ENCODE measurements at regions of chr5 and their contacts with region 1.

Region 1: DNA sequence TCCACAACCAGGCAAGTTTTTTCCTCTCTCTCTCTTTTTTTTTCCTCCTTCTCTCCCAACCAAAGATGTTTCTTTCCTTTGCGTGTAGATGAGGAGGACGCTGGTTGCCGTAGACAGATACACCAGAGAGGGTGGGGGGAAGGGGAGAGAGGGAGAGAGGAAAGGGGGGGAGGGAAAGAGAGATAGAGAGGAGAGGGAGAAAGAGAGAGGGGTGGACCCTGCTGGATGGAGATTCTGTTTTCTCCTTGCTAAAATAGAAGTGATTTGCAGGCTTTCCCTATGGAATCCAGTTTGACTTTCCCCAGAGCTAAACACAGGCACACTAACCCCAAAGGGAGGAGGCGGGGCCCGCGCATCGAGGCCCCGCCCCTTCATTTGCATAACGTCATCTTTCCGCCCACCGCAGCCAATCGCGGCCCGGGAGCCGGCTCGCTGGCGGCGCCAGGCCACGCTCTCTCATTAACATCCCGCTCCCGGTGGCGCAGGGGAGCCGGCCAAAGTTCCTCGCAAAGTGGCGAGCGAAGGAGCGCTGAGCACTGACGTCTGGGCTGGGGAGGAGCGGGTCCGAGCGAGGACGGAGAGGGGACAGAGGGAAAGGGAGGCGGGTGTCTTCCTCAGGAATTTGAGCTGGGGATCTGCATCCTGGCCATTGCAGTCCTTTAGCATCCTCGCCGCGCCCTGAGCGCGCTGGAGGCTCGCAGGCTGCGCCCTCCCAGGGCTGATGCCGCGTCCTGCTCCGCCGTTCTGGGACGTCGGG is 487 bp upstream of the EBF1 start:
- DNase-seq: peak; percentile 85
- H3K4me3 ChIP-seq: peak overlapping the region; percentile 35
- H3K27ac ChIP-seq: peak overlapping the region; percentile 44
- H3K4me1 ChIP-seq: no peaks in the 10 kb centered on the region
- H3K27me3 ChIP-seq: peaks cover 82% of the 10 kb centered on the region
- CTCF ChIP-seq: no peak

Region 2: DNA sequence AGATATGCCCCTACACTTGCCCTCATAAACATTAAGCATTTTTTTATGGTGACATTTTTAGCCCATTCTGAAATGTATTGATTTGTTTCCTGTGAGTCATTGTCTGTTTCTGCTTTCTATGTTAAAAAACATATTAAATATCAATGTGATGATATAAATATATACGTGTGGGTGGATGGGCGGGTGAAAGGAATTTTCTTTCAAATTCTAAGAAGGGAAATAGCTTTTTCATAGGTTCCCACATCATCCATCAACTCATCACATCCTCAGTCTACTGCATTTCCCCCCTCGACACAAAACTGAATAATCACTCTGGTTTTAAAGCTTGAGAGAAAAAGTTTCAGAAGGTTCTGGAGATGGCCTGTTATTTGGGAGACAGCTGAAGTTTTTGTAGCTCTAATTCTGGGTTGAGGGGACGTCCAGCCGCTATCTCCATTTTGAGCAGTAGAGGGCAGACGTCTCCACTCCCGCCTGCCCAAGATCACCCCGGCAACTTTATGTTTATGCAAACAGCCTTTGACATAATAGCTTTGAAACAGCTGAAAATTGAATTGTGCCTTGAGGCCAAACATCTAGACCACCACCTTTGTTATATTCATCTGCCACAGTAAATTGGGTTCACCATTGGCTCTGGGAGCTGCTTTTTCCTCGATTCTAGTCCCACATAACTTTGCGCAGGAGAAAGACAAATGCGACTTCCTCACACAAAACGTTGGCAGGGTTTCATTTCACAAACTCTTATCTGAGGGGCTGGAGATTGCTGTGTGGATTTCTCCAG is 1025.0 kb before region 1 on chr5:
- intact Hi-C with region 1: loop called (anchors 5 kb)
- DNase-seq: peak; percentile 51
- H3K4me3 ChIP-seq: no peak overlapping the region
- H3K27ac ChIP-seq: no peak overlapping the region
- H3K4me1 ChIP-seq: no peaks in the 10 kb centered on the region
- H3K27me3 ChIP-seq: no peaks in the 10 kb centered on the region
- CTCF ChIP-seq: peak; percentile 72

Measured in colonic mucosa (tissue), 4 donors.